Activated CD4-positive, alpha-beta T cell treated with anti-CD3 and anti-CD28 coated beads for 36 hours (primary cell): ENCODE measurements at regions of chr9 and their contacts with region 1.

Region 1: GRCh38 chr9:99184475-99185347 is 37.0 kb downstream of the ALG2 start:
- DNase-seq: peak; percentile 88
- ATAC-seq: peak; percentile 89
- H3K4me3 Mint-ChIP-seq: no peak overlapping the region
- H3K27ac Mint-ChIP-seq: peak overlapping the region; percentile 33
- H3K4me1 Mint-ChIP-seq: peaks cover 42% of the 10 kb centered on the region
- H3K27me3 Mint-ChIP-seq: peaks cover 6% of the 10 kb centered on the region

Region 2: DNA sequence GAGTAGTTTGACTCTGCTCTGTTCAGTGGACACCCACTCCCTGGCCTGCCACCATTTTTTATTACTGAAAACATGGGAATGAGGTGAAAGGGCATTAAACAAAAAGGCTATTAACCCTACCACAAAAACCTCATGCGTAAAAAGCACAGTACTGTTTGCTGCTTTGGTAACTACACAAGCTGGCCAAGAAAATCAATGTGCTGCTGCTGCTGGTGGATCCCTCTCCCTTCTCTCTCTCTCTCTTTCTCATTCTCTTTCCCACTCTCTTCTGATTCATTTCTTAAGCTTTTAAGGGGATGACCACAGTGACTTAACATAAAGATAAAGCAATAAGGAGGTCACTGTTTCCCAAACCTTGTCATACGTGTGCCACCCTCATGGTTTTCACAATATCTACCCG is 746.0 kb before region 1 on chr9:
- CTCF ChIA-PET with region 1: no interaction called
- POLR2A ChIA-PET with region 1: no interaction called
- intact Hi-C with region 1: no loop called
- DNase-seq: no peak
- ATAC-seq: no peak
- H3K4me3 Mint-ChIP-seq: no peak overlapping the region
- H3K27ac Mint-ChIP-seq: no peak overlapping the region
- H3K4me1 Mint-ChIP-seq: no peaks in the 10 kb centered on the region
- H3K27me3 Mint-ChIP-seq: peaks cover 1% of the 10 kb centered on the region

Region 3: GRCh38 chr9:99057665-99058625 is 126.8 kb before region 1 on chr9:
- CTCF ChIA-PET with region 1: no interaction called
- POLR2A ChIA-PET with region 1: no interaction called
- intact Hi-C with region 1: no loop called
- DNase-seq: peak; percentile 89
- ATAC-seq: peak; percentile 59
- H3K4me3 Mint-ChIP-seq: peak overlapping the region; percentile 35
- H3K27ac Mint-ChIP-seq: peak overlapping the region; percentile 79
- H3K4me1 Mint-ChIP-seq: peaks cover 66% of the 10 kb centered on the region
- H3K27me3 Mint-ChIP-seq: peaks cover 2% of the 10 kb centered on the region

Region 4: GRCh38 chr9:99162759-99163364 is 21.8 kb before region 1 on chr9:
- CTCF ChIA-PET with region 1: interaction called, 11 read pairs
- POLR2A ChIA-PET with region 1: no interaction called
- intact Hi-C with region 1: loop called (anchors 1 to 2 kb)
- DNase-seq: no peak
- ATAC-seq: peak; percentile 35
- H3K4me3 Mint-ChIP-seq: no peak overlapping the region
- H3K27ac Mint-ChIP-seq: no peak overlapping the region
- H3K4me1 Mint-ChIP-seq: peaks cover 22% of the 10 kb centered on the region
- H3K27me3 Mint-ChIP-seq: peaks cover 8% of the 10 kb centered on the region

Region 5: DNA sequence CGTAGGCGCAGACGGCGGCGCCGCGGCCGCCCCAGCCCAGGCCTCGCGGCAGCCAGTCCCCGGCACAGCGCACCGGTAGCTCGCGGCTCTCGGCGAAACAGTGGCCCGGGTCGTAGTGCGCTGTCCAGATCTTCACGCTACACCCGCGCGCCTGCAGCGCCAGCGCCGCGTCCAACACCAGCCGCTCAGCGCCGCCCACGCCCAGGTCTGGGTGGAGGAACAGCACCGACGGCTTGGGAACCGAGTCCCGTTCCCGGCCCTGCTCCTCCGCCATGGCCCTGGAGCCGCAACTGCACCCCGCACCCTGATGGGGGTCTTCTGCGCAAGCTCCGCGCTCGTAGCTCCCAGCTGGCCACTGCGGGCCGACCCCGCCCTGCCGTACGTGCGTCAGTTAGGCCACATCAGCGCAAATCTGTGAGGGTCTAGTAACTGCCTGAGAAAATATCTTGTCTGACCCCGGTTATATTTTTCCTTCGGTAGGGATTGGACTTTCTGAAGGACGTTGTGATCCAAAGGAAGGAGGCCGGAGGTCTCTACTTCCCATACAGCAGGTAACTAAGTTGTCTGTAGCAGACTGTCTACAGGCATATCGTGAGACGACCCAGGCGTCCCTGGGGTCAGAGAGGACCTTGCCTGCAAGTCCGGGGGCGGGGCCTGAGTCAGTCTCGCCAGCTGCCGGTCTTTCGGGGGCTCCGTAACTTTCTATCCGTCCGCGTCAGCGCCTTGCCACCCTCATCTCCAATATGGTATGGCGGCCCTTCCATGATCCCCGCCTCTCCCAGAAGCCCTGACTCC is 37.1 kb after region 1 on chr9 and contains the starts of genes ALG2 and SEC61B:
- CTCF ChIA-PET with region 1: interaction called, 11 read pairs
- POLR2A ChIA-PET with region 1: no interaction called
- intact Hi-C with region 1: loop called (anchors 1 kb)
- DNase-seq: peak; percentile 97
- ATAC-seq: peak; percentile 94
- H3K4me3 Mint-ChIP-seq: peak within 1 kb of the TSS; percentile 99
- H3K27ac Mint-ChIP-seq: peak within 1 kb of the TSS; percentile 99
- H3K4me1 Mint-ChIP-seq: peaks cover 67% of the 10 kb centered on the region
- H3K27me3 Mint-ChIP-seq: no peaks in the 10 kb centered on the region
- total RNA-seq, gene ALG2: 22.8 to 31.1 TPM
- total RNA-seq, gene SEC61B: 81.0 to 139 TPM

Region 6: GRCh38 chr9:99266255-99267023 is 81.7 kb after region 1 on chr9:
- CTCF ChIA-PET with region 1: interaction called, 5 read pairs
- POLR2A ChIA-PET with region 1: no interaction called
- intact Hi-C with region 1: loop called in 1 of 2 experiments (anchors 2 kb)
- DNase-seq: peak; percentile 83
- ATAC-seq: peak; percentile 85
- H3K4me3 Mint-ChIP-seq: peak overlapping the region; percentile 48
- H3K27ac Mint-ChIP-seq: peak overlapping the region; percentile 65
- H3K4me1 Mint-ChIP-seq: peaks cover 23% of the 10 kb centered on the region
- H3K27me3 Mint-ChIP-seq: peaks cover 5% of the 10 kb centered on the region

Region 7: GRCh38 chr9:99954819-99955218 is 770.1 kb after region 1 on chr9:
- CTCF ChIA-PET with region 1: no interaction called
- POLR2A ChIA-PET with region 1: no interaction called
- intact Hi-C with region 1: loop called in 1 of 2 experiments (anchors 2 kb)
- DNase-seq: no peak
- ATAC-seq: peak; percentile 91
- H3K4me3 Mint-ChIP-seq: no peak overlapping the region
- H3K27ac Mint-ChIP-seq: peak overlapping the region; percentile 47
- H3K4me1 Mint-ChIP-seq: peaks cover 28% of the 10 kb centered on the region
- H3K27me3 Mint-ChIP-seq: no peaks in the 10 kb centered on the region

Region 8: GRCh38 chr9:100437860-100438805 is 1253.4 kb after region 1 on chr9:
- CTCF ChIA-PET with region 1: no interaction called
- POLR2A ChIA-PET with region 1: no interaction called
- intact Hi-C with region 1: loop called in 1 of 2 experiments (anchors 10 kb)
- DNase-seq: peak; percentile 78
- ATAC-seq: peak; percentile 47
- H3K4me3 Mint-ChIP-seq: no peak overlapping the region
- H3K27ac Mint-ChIP-seq: no peak overlapping the region
- H3K4me1 Mint-ChIP-seq: no peaks in the 10 kb centered on the region
- H3K27me3 Mint-ChIP-seq: no peaks in the 10 kb centered on the region